ENCODE measurements at regions of chr12 and their contacts with region 1.

Region 1: DNA sequence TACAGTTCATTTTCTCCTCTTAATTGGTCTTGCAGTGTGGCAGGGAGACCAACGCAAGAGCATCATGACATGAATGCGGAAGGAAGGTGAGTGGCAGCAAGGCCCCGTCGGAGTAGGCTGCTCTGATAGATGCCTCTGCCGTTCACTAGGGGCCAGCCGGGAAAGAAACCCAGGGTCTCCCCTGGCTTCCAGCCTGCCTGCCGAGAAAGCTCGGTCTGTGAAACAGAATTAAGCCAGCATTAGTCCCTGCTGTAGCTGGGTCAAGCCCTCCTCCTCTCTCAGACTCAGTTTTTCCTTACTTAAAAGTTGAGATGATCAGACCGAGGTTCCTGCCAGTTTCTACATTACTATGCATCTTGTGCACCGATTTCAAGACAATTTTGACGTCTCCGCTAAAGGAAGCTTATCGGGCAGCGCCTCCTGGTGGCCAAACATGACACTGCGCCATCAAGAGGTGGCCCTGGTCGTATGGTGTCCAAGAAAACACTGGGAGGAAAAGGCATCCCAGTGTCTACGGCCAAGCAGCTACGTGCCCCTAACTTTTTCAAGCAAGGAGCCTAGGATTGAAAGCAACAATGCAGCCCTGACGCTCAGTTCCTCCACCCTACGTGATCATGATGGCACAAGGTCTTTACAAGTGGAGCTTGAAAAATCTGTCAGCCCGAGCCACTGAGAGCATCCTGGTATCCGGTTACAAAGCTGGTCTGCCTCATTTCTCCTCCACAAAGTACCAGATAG is 131.6 kb downstream of the KSR2 start:
- DNase-seq: peak; percentile 95
- ATAC-seq: peak; percentile 38
- H3K4me3 ChIP-seq: no peak overlapping the region
- H3K27ac ChIP-seq: no peak overlapping the region
- H3K4me1 ChIP-seq: peaks cover 23% of the 10 kb centered on the region
- H3K27me3 ChIP-seq: no peaks in the 10 kb centered on the region
- CTCF ChIP-seq: peak; percentile 100

Region 2: GRCh38 chr12:117212563-117213190 is 624.5 kb before region 1 on chr12:
- CTCF ChIA-PET with region 1: interaction called, 4 read pairs
- POLR2A ChIA-PET with region 1: no interaction called
- intact Hi-C with region 1: loop called (anchors 1 kb)
- DNase-seq: peak; percentile 91
- ATAC-seq: peak; percentile 92
- H3K4me3 ChIP-seq: no peak overlapping the region
- H3K27ac ChIP-seq: no peak overlapping the region
- H3K4me1 ChIP-seq: peaks cover 8% of the 10 kb centered on the region
- H3K27me3 ChIP-seq: peaks cover 25% of the 10 kb centered on the region
- CTCF ChIP-seq: peak; percentile 99

Region 3: DNA sequence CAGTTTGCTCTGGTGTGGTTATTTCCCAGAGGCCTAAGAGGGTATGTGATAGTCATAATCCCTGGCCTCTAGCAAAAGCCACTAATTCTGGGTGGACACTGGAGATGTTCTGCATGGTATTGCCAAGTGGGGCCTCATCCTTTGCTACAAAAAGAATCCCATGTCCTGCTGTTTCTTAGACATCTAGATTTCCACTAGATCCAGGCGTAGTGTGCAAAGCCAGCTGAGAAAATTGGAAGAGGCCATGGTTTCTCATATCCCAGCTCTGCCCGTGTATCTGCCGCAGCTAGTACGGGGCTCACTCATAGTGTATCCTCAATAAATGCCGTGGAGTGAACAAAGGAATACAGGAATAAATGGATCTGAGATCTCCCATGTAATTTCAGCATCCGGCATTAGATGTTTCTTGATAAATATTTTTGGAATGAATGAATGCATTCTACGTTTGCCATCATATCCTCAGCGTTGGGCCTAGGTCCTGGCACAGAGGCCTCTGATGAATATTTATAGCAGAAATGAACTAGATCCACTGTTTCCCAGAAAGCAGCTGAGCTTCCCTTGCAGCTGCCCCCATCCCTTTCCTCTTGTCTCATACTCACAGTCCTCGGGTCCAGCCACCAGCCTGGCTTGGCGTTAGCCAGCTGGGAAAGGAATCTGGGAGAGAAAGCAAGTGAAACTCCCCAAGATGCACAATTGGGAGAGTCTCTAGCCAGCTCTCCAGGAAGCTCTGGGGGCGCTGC is 399.5 kb before region 1 on chr12:
- CTCF ChIA-PET with region 1: no interaction called
- POLR2A ChIA-PET with region 1: no interaction called
- intact Hi-C with region 1: loop called (anchors 1 kb)
- DNase-seq: no peak
- ATAC-seq: no peak
- H3K4me3 ChIP-seq: no peak overlapping the region
- H3K27ac ChIP-seq: no peak overlapping the region
- H3K4me1 ChIP-seq: peaks cover 5% of the 10 kb centered on the region; the same call in 1 of the 2 replicates
- H3K27me3 ChIP-seq: no peaks in the 10 kb centered on the region
- CTCF ChIP-seq: no peak

Region 4: GRCh38 chr12:117587631-117588287 is 249.4 kb before region 1 on chr12:
- CTCF ChIA-PET with region 1: interaction called, 6 read pairs
- POLR2A ChIA-PET with region 1: no interaction called
- intact Hi-C with region 1: loop called (anchors 1 kb)
- DNase-seq: peak; percentile 76
- ATAC-seq: peak; percentile 90
- H3K4me3 ChIP-seq: no peak overlapping the region
- H3K27ac ChIP-seq: no peak overlapping the region
- H3K4me1 ChIP-seq: no peaks in the 10 kb centered on the region
- H3K27me3 ChIP-seq: no peaks in the 10 kb centered on the region
- CTCF ChIP-seq: peak; percentile 92

Region 5: GRCh38 chr12:117699575-117699974 is 137.6 kb before region 1 on chr12:
- CTCF ChIA-PET with region 1: no interaction called
- POLR2A ChIA-PET with region 1: no interaction called
- intact Hi-C with region 1: loop called (anchors 1 kb)
- DNase-seq: peak; percentile 86
- ATAC-seq: peak; percentile 79
- H3K4me3 ChIP-seq: no peak overlapping the region; the same call in 1 of the 2 replicates
- H3K27ac ChIP-seq: peak overlapping the region; percentile 92
- H3K4me1 ChIP-seq: peaks cover 23% of the 10 kb centered on the region
- H3K27me3 ChIP-seq: no peaks in the 10 kb centered on the region
- CTCF ChIP-seq: no peak